A549 (cell line): ENCODE measurements at regions of chr1 and their contacts with region 1.

Region 1: GRCh38 chr1:204128964-204129896 is 22.6 kb downstream of the ETNK2 start:
- DNase-seq: peak; percentile 62 to 94
- ATAC-seq: peak; percentile 78 to 91
- H3K4me3 ChIP-seq: peak overlapping the region; percentile 23; the same call in 2 of the 3 replicates
- H3K27ac ChIP-seq: peak overlapping the region; percentile 47 to 78; a peak in 5 of 6 replicates
- H3K4me1 ChIP-seq: peaks cover 31% of the 10 kb centered on the region
- CTCF ChIP-seq: peak; percentile 90
- EP300 ChIP-seq: no peak
- POLR2A ChIP-seq: no peak
- RAD21 ChIP-seq: peak; percentile 83 to 93

Region 2: GRCh38 chr1:203861379-203862184 is 267.6 kb before region 1 on chr1 and contains the start of gene SNRPE:
- CTCF ChIA-PET with region 1: interaction called, 757 read pairs
- POLR2A ChIA-PET with region 1: interaction called, 10 read pairs
- DNase-seq: peak; percentile 95 to 99
- ATAC-seq: peak; percentile 94 to 97
- H3K4me3 ChIP-seq: peak within 1 kb of the TSS; percentile 92
- H3K27ac ChIP-seq: peak within 1 kb of the TSS; percentile 92 to 93
- H3K4me1 ChIP-seq: peaks cover 20% of the 10 kb centered on the region; the same call in 2 of the 3 replicates
- CTCF ChIP-seq: peak; percentile 90
- EP300 ChIP-seq: no peak
- POLR2A ChIP-seq: peak; percentile 76
- RAD21 ChIP-seq: peak; percentile 94 to 97
- polyA plus RNA-seq, gene SNRPE: 371 and 386 TPM in 2 replicates

Region 3: DNA sequence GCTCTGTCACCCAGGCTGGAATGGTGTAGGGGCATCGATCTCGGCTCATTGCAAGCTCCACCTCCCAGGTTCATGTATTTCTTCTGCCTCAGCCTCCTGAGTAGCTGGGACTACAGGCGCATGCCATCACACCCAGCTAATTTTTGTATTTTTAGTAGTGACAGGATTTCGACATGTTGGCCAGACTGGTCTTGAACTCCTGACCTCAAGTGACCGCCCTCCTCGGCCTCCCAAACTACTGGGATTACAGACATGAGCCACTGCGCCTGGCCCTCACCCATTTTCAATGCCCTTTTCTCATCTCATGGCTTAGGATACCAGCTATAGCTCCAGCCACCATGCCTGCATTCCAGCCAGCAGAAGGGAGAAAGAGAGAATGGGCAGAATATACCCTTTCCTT is 69.3 kb before region 1 on chr1:
- CTCF ChIA-PET with region 1: interaction called, 18 read pairs
- POLR2A ChIA-PET with region 1: no interaction called
- DNase-seq: no peak
- ATAC-seq: no peak
- H3K4me3 ChIP-seq: no peak overlapping the region
- H3K27ac ChIP-seq: no peak overlapping the region
- H3K4me1 ChIP-seq: peaks cover 19% of the 10 kb centered on the region
- CTCF ChIP-seq: no peak
- EP300 ChIP-seq: no peak
- POLR2A ChIP-seq: no peak
- RAD21 ChIP-seq: no peak

Region 4: DNA sequence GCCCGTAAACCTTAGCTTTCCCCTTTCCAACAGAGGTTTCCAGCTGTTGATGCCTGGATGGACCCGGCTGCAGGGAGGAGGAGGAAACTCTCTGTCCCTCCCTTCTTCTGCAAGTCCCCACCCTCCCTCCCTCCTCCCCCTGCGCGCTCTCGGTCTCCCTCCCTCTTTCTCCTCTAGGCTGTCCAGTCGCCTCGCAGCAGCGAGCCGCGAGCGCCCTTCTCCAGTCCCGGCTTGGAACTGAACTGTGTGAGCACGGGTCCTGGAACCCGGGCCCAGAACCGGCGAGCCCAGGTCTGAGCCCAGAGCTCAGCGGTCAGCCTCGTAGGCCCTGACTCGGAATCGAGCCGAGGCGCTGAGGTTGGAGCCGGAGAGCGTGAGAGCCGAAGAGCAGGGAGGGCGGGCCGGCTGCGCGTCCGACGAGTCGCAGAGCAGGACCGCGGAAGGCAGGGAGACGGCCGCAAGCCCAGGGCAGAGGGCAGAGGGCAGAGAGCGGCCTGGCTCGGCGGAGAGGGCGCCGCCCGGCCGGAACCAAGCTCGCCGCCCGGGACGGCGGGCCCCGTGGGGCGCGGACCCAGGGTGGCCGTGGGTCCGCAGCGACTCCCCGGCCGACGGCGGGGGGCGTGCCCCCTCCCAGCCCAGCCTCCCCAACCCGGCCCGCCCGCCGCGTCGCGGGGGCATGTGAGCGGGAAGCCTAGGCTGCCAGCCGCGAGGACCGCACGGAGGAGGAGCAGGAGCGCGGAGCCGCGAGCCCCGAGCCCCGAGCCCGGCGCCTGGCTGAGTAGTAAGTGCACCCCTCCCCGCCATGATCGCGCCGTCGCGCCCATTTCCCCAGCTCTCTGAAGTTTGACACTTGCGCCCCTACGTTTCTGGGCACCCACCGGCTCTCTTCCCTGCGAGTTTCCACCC is 56.0 kb before region 1 on chr1 and contains the start of gene SOX13:
- CTCF ChIA-PET with region 1: interaction called, 30 read pairs
- POLR2A ChIA-PET with region 1: interaction called, 4 read pairs
- DNase-seq: peak; percentile 91 to 95
- ATAC-seq: peak; percentile 85 to 91
- H3K4me3 ChIP-seq: peak within 1 kb of the TSS; percentile 86
- H3K27ac ChIP-seq: peak within 1 kb of the TSS; percentile 82 to 90
- H3K4me1 ChIP-seq: peaks cover 8% of the 10 kb centered on the region
- CTCF ChIP-seq: peak; percentile 22; the same call in 2 of the 3 replicates
- EP300 ChIP-seq: no peak
- POLR2A ChIP-seq: peak; percentile 97
- RAD21 ChIP-seq: peak; percentile 53 to 67
- polyA plus RNA-seq, gene SOX13: 9.8 TPM in 2 replicates

Region 5: GRCh38 chr1:204100693-204101092 is 28.5 kb before region 1 on chr1:
- CTCF ChIA-PET with region 1: interaction called, 11 read pairs
- POLR2A ChIA-PET with region 1: no interaction called
- DNase-seq: no peak
- ATAC-seq: no peak
- H3K4me3 ChIP-seq: no peak overlapping the region
- H3K27ac ChIP-seq: 0 out of 6 replicates have a peak overlapping the region, but pooled peaks of 1 of the 2 experiments have one; percentile 11
- H3K4me1 ChIP-seq: peaks cover 38% of the 10 kb centered on the region
- CTCF ChIP-seq: no peak
- EP300 ChIP-seq: no peak
- POLR2A ChIP-seq: no peak
- RAD21 ChIP-seq: no peak

Region 6: GRCh38 chr1:204114606-204115005 is 14.6 kb before region 1 on chr1:
- CTCF ChIA-PET with region 1: interaction called, 68 read pairs
- POLR2A ChIA-PET with region 1: no interaction called
- DNase-seq: no peak
- ATAC-seq: no peak
- H3K4me3 ChIP-seq: no peak overlapping the region
- H3K27ac ChIP-seq: no peak overlapping the region
- H3K4me1 ChIP-seq: peaks cover 19% of the 10 kb centered on the region
- CTCF ChIP-seq: no peak
- EP300 ChIP-seq: no peak
- POLR2A ChIP-seq: no peak
- RAD21 ChIP-seq: no peak

Region 7: GRCh38 chr1:204151552-204152309 is 22.5 kb after region 1 on chr1 and contains the start of gene ETNK2:
- CTCF ChIA-PET with region 1: interaction called, 24 read pairs
- POLR2A ChIA-PET with region 1: interaction called, 4 read pairs
- DNase-seq: peak; percentile 33 to 83
- ATAC-seq: peak; percentile 55 to 69
- H3K4me3 ChIP-seq: peak within 1 kb of the TSS; percentile 96
- H3K27ac ChIP-seq: peak within 1 kb of the TSS; percentile 78 to 85
- H3K4me1 ChIP-seq: peaks cover 16% of the 10 kb centered on the region
- CTCF ChIP-seq: no peak
- EP300 ChIP-seq: no peak
- POLR2A ChIP-seq: no peak; the same call in none of the 2 replicates
- RAD21 ChIP-seq: no peak
- polyA plus RNA-seq, gene ETNK2: 5.1 and 5.2 TPM in 2 replicates